ENCODE measurements at regions of chr1 and their contacts with region 1.

Region 1: GRCh38 chr1:22969304-22969709 is 3.4 kb downstream of the LACTBL1 start:
- DNase-seq: peak; percentile 87
- H3K4me3 ChIP-seq: no peak overlapping the region
- H3K27ac ChIP-seq: no peak overlapping the region
- H3K4me1 ChIP-seq: peaks cover 26% of the 10 kb centered on the region
- H3K27me3 ChIP-seq: no peaks in the 10 kb centered on the region
- CTCF ChIP-seq: no peak

Region 2: GRCh38 chr1:22665752-22666151 is 303.6 kb before region 1 on chr1:
- CTCF ChIA-PET with region 1: no interaction called
- POLR2A ChIA-PET with region 1: no interaction called
- intact Hi-C with region 1: loop called (anchors 2 kb)
- DNase-seq: peak; percentile 48
- H3K4me3 ChIP-seq: no peak overlapping the region
- H3K27ac ChIP-seq: no peak overlapping the region
- H3K4me1 ChIP-seq: no peaks in the 10 kb centered on the region
- H3K27me3 ChIP-seq: no peaks in the 10 kb centered on the region
- CTCF ChIP-seq: peak; percentile 61

Region 3: GRCh38 chr1:22704440-22705067 is 264.8 kb before region 1 on chr1:
- CTCF ChIA-PET with region 1: no interaction called
- POLR2A ChIA-PET with region 1: no interaction called
- intact Hi-C with region 1: loop called (anchors 1 kb)
- DNase-seq: peak; percentile 85
- H3K4me3 ChIP-seq: no peak overlapping the region
- H3K27ac ChIP-seq: no peak overlapping the region
- H3K4me1 ChIP-seq: peaks cover 7% of the 10 kb centered on the region
- H3K27me3 ChIP-seq: no peaks in the 10 kb centered on the region
- CTCF ChIP-seq: peak; percentile 84

Region 4: GRCh38 chr1:23273450-23274133 is 304.3 kb after region 1 on chr1:
- CTCF ChIA-PET with region 1: no interaction called
- POLR2A ChIA-PET with region 1: no interaction called
- intact Hi-C with region 1: loop called (anchors 5 kb)
- DNase-seq: peak; percentile 48
- H3K4me3 ChIP-seq: no peak overlapping the region
- H3K27ac ChIP-seq: no peak overlapping the region
- H3K4me1 ChIP-seq: no peaks in the 10 kb centered on the region
- H3K27me3 ChIP-seq: no peaks in the 10 kb centered on the region
- CTCF ChIP-seq: no peak

Region 5: DNA sequence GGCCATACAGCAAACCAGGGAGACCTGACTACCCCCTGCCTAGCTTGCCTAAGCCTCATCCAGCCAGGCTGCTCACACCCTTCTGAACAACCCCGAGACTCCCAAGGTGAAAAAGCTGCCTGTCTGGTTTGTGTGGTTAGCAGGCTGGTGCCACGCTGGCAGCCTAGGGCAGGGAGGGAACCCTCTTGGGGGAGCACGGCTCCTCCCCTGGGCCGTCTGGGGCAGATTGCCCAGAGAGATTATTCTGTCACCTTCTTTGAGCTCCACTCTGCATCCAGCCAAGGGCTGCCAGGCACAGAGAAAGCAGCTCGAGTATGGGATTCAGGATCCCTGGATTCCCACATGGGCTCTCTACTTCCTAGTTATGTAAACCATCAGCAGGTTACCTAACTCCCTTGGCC is 482.7 kb after region 1 on chr1:
- CTCF ChIA-PET with region 1: no interaction called
- POLR2A ChIA-PET with region 1: no interaction called
- intact Hi-C with region 1: no loop called
- DNase-seq: peak; percentile 29
- H3K4me3 ChIP-seq: no peak overlapping the region
- H3K27ac ChIP-seq: no peak overlapping the region
- H3K4me1 ChIP-seq: peaks cover 6% of the 10 kb centered on the region
- H3K27me3 ChIP-seq: no peaks in the 10 kb centered on the region
- CTCF ChIP-seq: no peak